HCT116 (cell line): ENCODE measurements at regions of chr9 and their contacts with region 1.

Region 1: DNA sequence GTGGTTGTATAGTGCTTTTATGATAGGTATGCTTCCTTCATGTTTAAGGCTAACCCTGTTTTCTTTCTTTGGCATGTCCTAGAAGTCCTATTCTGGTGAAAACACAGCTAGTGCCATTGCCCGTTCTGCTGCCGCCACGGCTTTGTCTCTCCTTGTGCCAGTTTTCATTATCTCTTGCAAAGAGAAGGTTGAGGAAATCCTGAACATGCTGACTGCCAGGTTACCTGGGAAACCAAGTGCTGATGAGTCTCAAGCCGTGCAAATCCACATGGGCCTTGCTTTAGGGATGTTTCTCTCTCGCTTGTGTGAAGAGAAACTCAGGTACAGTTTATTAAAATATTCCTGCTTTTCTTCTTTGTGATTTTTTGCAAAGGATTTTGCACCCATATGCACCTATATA is 102.2 kb downstream of the HACD4 start:
- DNase-seq: no peak
- ATAC-seq: no peak
- H3K4me3 ChIP-seq: no peak overlapping the region
- H3K27ac ChIP-seq: no peak overlapping the region
- H3K4me1 ChIP-seq: no peaks in the 10 kb centered on the region
- H3K27me3 ChIP-seq: no peaks in the 10 kb centered on the region
- CTCF ChIP-seq: no peak
- POLR2A ChIP-seq: no peak
- RAD21 ChIP-seq: no peak

Region 2: GRCh38 chr9:20526500-20527319 is 402.6 kb before region 1 on chr9:
- CTCF ChIA-PET with region 1: no interaction called
- POLR2A ChIA-PET with region 1: no interaction called
- RAD21 ChIA-PET with region 1: no interaction called
- intact Hi-C with region 1: loop called (anchors 10 kb)
- DNase-seq: no peak
- ATAC-seq: peak; percentile 25; the same call in 1 of the 2 replicates
- H3K4me3 ChIP-seq: no peak overlapping the region
- H3K27ac ChIP-seq: no peak overlapping the region
- H3K4me1 ChIP-seq: no peaks in the 10 kb centered on the region
- H3K27me3 ChIP-seq: peaks cover 3% of the 10 kb centered on the region; the same call in 1 of the 2 replicates
- CTCF ChIP-seq: no peak
- POLR2A ChIP-seq: no peak
- RAD21 ChIP-seq: no peak

Region 3: GRCh38 chr9:20906326-20906725 is 22.9 kb before region 1 on chr9:
- CTCF ChIA-PET with region 1: no interaction called
- POLR2A ChIA-PET with region 1: no interaction called
- RAD21 ChIA-PET with region 1: no interaction called
- intact Hi-C with region 1: no loop called
- DNase-seq: no peak
- ATAC-seq: no peak
- H3K4me3 ChIP-seq: no peak overlapping the region
- H3K27ac ChIP-seq: no peak overlapping the region
- H3K4me1 ChIP-seq: no peaks in the 10 kb centered on the region
- H3K27me3 ChIP-seq: no peaks in the 10 kb centered on the region
- CTCF ChIP-seq: no peak
- POLR2A ChIP-seq: no peak
- RAD21 ChIP-seq: no peak